ENCODE measurements at regions of chr3 and their contacts with region 1.

Region 1: DNA sequence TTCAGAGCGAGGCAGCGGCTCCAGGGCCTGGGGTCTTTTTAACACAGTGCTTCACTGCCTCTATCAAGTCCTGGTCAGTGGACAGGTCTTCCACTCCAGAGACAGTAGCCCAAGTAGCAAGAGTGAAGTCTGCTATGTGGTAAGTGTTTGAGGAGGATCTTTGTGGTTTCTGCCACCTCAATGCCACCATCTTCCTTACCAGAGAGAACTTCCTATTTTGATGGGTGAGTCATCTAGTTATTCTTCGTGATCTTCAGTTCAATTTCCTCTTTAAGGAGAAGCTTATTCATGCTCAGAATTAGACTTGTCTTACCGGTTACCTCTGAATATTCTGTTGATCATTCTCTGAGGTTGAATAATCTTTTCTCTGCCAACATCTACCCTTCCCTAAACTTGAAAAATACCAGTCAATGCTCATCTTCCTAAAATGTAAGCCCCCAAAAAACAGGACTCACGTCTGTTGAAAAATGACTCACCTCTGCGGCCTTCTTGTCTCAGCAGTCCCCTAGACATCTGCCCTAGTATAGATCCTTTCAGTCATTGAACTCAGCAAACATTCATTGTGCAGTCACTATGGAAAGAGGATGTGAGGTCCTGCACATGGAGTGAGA is 32.2 kb upstream of the BCL6 start:
- DNase-seq: peak; percentile 40
- H3K4me3 Mint-ChIP-seq: peak overlapping the region; percentile 32
- H3K27ac Mint-ChIP-seq: peak overlapping the region; percentile 91
- H3K4me1 Mint-ChIP-seq: peaks cover 64% of the 10 kb centered on the region
- H3K27me3 Mint-ChIP-seq: no peaks in the 10 kb centered on the region

Region 2: DNA sequence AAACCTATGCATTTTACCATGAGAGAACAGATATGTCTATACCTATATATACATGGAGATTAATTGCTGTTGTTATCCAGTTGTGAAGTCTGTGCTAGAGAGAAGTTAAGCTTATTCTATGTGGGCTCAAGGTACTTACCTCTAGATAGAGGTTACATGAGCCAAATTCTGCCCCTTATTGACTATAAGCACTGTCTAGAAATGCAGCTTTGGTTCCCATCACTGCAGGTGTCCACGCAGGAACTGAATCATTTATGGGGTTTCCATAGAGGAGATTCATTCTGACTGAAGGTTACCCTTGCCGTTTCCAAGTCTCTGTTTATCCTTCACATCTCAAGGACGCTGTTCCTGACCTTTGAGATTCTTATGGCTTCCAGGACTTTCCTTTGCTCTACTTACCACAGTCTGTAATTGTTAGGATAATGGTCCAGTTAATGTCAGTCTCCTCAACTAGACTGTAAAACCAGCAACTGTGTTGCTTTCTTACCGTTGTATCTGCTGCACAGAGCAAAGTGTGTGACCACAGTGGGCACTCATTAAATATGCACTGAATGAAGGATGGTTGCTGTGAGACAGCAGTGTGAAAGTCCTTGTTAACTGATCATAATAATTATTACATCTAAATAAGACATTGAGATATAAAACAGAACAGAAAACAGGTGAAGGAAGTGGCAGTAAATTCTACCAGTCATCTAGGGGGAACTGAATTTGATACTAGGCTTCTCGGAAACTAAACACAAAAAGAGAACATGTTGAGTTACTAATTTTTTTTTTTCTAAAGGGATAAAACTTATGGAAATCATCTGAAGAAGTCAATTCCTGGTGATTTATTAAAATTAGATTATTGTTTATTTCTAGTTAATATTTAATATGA is 11.8 kb after region 1 on chr3:
- intact Hi-C with region 1: loop called (anchors 1 kb)
- DNase-seq: no peak
- H3K4me3 Mint-ChIP-seq: no peak overlapping the region
- H3K27ac Mint-ChIP-seq: peak overlapping the region; percentile 56
- H3K4me1 Mint-ChIP-seq: peaks cover 22% of the 10 kb centered on the region
- H3K27me3 Mint-ChIP-seq: no peaks in the 10 kb centered on the region

Region 3: GRCh38 chr3:187822402-187822801 is 45.0 kb after region 1 on chr3:
- intact Hi-C with region 1: no loop called
- DNase-seq: no peak
- H3K4me3 Mint-ChIP-seq: no peak overlapping the region
- H3K27ac Mint-ChIP-seq: peak overlapping the region; percentile 89
- H3K4me1 Mint-ChIP-seq: peaks cover 36% of the 10 kb centered on the region
- H3K27me3 Mint-ChIP-seq: no peaks in the 10 kb centered on the region

Region 4: DNA sequence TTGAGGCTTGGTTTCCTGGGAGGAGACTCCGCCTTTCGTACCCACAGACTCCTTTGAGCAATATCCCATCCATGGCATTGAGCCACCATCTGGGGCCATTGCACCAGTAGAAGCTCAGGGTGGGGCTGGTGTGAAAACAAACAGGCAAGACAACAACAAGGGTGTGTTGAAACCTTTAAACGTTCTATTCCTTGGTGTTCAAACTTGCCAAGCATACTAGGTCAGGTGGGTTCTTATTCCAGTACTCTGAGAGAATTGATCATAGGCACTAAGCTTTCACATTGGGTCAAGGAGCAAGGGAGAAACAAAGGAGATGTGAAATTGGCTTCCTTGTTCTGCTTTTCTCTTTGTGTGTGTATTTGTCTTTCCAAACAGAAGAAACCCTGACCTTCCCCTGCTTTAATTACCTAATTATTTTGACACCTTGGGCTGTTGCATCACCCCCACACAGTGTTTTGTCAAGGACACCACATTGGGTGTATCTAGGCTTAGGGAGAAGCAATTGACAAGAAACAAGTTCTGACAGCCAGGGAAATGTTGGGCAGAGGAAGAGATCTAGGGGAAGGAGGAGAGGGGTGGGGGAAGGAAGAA is 73.0 kb after region 1 on chr3:
- intact Hi-C with region 1: loop called (anchors 5 kb)
- DNase-seq: no peak
- H3K4me3 Mint-ChIP-seq: no peak overlapping the region
- H3K27ac Mint-ChIP-seq: no peak overlapping the region
- H3K4me1 Mint-ChIP-seq: peaks cover 28% of the 10 kb centered on the region
- H3K27me3 Mint-ChIP-seq: no peaks in the 10 kb centered on the region